ENCODE measurements at regions of chr5 and their contacts with region 1.

Region 1: GRCh38 chr5:32605766-32606152 is 20.4 kb downstream of the SUB1 start:
- DNase-seq: no peak
- H3K4me3 ChIP-seq: no peak overlapping the region
- H3K27ac ChIP-seq: no peak overlapping the region
- H3K4me1 ChIP-seq: no peaks in the 10 kb centered on the region
- H3K27me3 ChIP-seq: no peaks in the 10 kb centered on the region
- CTCF ChIP-seq: no peak

Region 2: DNA sequence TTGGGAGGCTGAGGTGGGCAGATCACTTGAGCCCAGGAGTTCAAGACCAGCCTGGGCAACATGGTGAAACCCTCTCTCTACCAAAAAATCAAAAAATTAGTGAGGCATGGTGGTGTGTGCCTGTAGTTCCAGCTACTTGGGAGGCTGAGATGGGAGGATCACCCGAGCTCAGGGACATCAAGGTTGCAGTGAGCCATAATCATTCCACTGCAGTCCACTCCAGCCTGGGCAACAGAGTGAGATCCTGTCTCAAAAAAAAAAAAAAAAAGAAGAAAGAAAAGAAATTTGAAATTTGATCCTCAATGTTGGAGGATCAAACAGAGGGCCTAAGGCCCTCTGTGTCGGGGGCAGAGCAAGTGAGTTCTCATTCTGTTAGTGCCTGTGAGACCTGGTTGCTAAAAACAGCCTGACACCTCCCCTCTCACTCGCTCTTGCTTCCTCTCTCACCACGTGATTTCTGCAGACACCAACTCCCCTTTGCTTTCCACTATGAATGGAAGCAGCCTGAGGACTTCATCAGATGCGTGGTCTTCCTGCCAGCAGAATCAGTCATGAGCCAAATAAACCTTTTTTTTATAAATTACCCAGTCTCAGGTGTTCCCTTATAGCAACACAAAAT is 423.2 kb before region 1 on chr5:
- CTCF ChIA-PET with region 1: no interaction called
- POLR2A ChIA-PET with region 1: no interaction called
- intact Hi-C with region 1: no loop called
- DNase-seq: no peak
- H3K4me3 ChIP-seq: no peak overlapping the region
- H3K27ac ChIP-seq: no peak overlapping the region
- H3K4me1 ChIP-seq: no peaks in the 10 kb centered on the region
- H3K27me3 ChIP-seq: no peaks in the 10 kb centered on the region
- CTCF ChIP-seq: no peak

Region 3: GRCh38 chr5:33136785-33137184 is 531.0 kb after region 1 on chr5:
- CTCF ChIA-PET with region 1: no interaction called
- POLR2A ChIA-PET with region 1: interaction called, 15 read pairs
- intact Hi-C with region 1: no loop called
- DNase-seq: no peak
- H3K4me3 ChIP-seq: no peak overlapping the region
- H3K27ac ChIP-seq: no peak overlapping the region
- H3K4me1 ChIP-seq: no peaks in the 10 kb centered on the region
- H3K27me3 ChIP-seq: no peaks in the 10 kb centered on the region
- CTCF ChIP-seq: no peak